Heart right ventricle (tissue), 16 donors: ENCODE measurements at regions of chr7 and their contacts with region 1.

Region 1: DNA sequence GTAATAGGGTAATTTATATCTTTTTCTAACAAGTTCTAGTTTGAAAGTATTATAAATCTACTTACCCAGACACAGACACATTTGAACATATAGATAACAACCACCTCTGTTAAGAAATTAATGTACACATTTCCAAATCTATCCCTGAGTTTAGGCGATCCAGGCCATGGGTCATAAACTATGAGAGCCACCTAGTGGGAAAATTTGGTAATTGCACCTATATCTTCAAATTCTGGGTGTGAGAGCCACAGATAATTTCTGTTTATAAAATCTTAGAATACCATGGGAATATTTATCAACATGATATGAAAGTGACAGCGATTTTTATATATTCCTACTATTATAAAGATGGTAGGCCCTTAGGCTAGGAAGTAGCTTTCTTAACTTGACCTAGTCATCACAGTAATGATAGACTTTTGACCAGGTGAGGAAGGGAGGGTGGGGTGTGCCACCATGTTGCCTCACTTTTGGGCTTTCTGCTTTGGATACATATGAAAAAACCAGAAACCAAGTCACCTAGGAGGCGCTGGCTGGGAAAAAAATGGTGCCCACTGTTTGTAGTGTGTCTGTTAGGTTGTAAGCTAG is 8.0 kb upstream of the EPHA1 start:
- DNase-seq: no peak
- ATAC-seq: peak in 2 of 8 donors; percentile 42 to 67
- H3K4me3 ChIP-seq: no peak overlapping the region
- H3K27ac ChIP-seq: no peak overlapping the region
- H3K4me1 ChIP-seq: peaks cover 0 to 29% (median 0%) of the 10 kb centered on the region in 9 donors
- H3K27me3 ChIP-seq: peaks cover 0 to 29% (median 10%) of the 10 kb centered on the region in 7 donors
- CTCF ChIP-seq: peak; percentile 74 to 88 (median 82)

Region 2: DNA sequence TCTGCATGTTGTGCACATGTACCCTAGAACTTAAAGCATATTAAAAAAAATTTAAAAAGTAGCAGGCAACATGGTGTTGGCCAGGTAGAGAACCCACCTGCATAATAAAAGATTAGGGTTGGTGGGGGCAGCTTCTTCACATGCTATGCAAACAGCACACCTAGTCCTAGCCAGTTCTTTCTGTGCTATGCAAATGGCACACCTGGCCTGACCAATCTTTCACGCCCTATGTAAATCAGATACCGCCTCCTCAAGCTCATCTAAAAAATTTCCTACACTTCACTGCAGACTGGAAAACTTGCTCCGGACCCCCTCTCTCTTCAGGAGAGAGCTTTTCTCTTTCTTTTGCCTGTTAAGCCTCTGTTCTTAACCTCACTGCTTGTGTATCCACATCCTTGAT is 299.3 kb before region 1 on chr7:
- intact Hi-C with region 1: no loop called
- DNase-seq: no peak
- ATAC-seq: no peak
- H3K4me3 ChIP-seq: no peak overlapping the region
- H3K27ac ChIP-seq: no peak overlapping the region
- H3K4me1 ChIP-seq: no peaks in the 10 kb centered on the region
- H3K27me3 ChIP-seq: no peaks in the 10 kb centered on the region
- CTCF ChIP-seq: no peak

Region 3: DNA sequence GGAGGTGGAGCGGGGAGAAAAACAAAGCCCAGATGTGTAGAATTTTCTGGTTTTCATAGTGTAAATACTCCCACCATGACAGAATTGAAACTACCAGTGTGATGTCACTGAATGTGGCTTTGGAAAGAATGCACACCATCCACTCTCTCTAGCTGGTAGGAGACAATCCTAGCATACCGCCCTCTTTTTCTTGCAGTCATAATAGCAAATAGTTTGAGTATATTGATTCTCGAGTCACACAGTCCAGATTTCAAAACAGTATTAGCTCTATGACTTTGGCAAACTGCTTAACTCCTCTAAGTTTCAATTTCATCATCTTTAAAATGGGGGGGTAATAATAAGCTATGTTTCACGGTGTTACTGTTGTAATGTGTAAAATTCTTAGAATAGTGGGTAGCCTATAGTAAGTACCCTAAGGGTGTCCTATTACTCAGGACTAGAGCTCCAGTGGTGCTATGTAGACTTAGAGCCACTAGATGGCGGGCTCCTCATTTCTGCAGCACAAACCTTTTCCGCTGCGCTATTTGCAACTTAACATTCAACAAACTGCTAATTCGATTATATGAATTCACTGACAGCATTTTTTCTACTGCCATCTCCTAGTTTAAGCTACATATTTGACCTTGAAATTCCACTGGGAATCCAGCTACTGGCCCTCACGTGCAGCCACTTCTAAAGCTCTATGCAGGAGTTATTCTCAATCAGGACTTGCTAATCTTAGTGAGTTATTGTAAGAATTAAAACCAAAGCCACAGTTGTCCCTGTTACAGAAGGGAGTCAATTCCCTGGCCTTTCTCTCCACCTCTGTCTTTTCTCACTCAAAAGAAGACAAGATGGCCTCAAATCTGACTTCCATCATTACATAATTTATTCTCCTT is 176.1 kb before region 1 on chr7:
- intact Hi-C with region 1: loop called in 9 of 10 experiments (anchors 1 to 5 kb)
- DNase-seq: peak; percentile 33 to 70
- ATAC-seq: peak; percentile 69 to 94 (median 88)
- H3K4me3 ChIP-seq: peak overlapping the region in 1 of 10 donors; percentile 13
- H3K27ac ChIP-seq: peak overlapping the region in 2 of 10 donors; percentile 5 to 82
- H3K4me1 ChIP-seq: peaks cover 0 to 41% (median 4%) of the 10 kb centered on the region in 9 donors
- H3K27me3 ChIP-seq: no peaks in the 10 kb centered on the region
- CTCF ChIP-seq: peak; percentile 84 to 98 (median 95)

Region 4: DNA sequence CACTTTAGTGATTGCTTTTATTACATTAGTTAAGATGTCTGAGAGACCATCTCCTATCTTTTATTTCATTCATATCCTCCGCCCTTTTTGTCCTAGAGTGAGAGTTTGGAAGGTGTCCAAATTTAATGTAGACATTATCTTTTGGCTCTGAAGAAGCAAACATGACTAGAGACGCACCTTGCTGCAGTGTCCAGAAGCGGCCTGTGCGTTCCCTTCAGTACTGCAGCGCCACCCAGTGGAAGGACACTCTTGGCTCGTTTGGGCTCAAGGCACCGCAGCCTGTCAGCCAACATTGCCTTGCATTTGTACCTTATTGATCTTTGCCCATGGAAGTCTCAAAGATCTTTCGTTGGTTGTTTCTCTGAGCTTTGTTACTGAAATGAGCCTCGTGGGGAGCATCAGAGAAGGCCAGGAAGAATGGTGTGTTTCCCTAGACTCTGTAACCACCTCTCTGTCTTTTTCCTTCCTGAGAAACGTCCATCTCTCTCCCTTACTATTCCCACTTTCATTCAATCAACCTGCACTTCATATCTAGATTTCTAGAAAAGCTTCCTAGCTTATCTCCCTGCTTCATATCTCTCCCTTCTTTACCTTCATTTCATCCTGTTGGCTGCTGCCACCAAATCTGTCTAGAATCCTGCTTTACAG is 111.1 kb before region 1 on chr7:
- intact Hi-C with region 1: loop called in 5 of 10 experiments (anchors 5 to 10 kb)
- DNase-seq: peak; percentile 74 to 75
- ATAC-seq: peak; percentile 62 to 93 (median 86)
- H3K4me3 ChIP-seq: no peak overlapping the region
- H3K27ac ChIP-seq: no peak overlapping the region
- H3K4me1 ChIP-seq: peaks cover 0 to 35% (median 3%) of the 10 kb centered on the region in 9 donors
- H3K27me3 ChIP-seq: no peaks in the 10 kb centered on the region
- CTCF ChIP-seq: peak; percentile 49 to 88 (median 80)

Region 5: DNA sequence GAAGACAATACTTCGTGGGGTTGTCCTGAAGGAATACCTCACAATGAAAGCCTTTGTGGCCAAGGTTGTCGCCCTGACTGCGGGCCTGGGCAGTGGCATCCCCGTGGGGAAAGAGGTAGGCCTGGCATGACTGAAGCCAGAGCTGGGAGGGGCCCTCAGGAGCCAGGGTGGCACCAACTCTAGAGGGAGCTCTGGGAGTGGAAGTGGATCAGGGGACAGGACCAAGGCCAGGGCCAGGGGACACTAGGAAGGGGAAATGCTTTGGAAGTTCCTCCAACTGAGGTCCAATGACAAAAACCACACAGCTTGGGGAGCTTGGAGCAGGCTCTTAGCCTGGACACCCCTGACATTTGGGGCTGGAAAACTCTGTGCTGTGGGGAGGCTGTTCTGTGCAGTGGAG is 94.9 kb before region 1 on chr7:
- intact Hi-C with region 1: loop called in 2 of 10 experiments (anchors 10 kb)
- DNase-seq: no peak
- ATAC-seq: peak in 1 of 8 donors; percentile 48
- H3K4me3 ChIP-seq: no peak overlapping the region
- H3K27ac ChIP-seq: peak overlapping the region in 1 of 10 donors; percentile 21
- H3K4me1 ChIP-seq: peaks cover 0 to 13% (median 6%) of the 10 kb centered on the region in 9 donors
- H3K27me3 ChIP-seq: no peaks in the 10 kb centered on the region
- CTCF ChIP-seq: peak in 3 of 9 donors; percentile 12 to 45 (median 17)

Region 6: GRCh38 chr7:143337216-143337615 is 79.4 kb before region 1 on chr7:
- intact Hi-C with region 1: no loop called
- DNase-seq: no peak
- ATAC-seq: no peak
- H3K4me3 ChIP-seq: no peak overlapping the region
- H3K27ac ChIP-seq: no peak overlapping the region
- H3K4me1 ChIP-seq: no peaks in the 10 kb centered on the region
- H3K27me3 ChIP-seq: peaks cover 0 to 29% (median 12%) of the 10 kb centered on the region in 7 donors
- CTCF ChIP-seq: no peak

Region 7: DNA sequence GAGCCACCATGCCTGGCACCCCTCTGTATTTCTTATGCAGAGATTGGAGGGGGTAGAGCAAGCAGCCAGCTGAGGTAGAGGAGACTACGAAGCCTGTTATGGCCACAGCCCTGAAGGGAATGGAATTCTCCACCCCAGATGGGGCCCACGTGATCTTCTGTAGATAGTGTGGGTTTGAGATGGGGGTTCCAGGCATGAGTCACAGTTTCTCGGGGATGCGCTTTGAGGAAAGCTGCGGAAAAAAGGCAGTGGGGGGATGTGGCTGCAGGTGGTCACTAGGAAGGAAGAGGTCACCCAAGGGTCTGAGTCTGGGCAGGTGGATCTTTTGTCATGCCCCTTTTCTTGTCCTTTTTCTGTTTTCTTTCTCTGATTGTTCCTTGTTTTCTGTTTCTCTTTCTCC is 65.6 kb before region 1 on chr7:
- intact Hi-C with region 1: no loop called
- DNase-seq: no peak
- ATAC-seq: no peak
- H3K4me3 ChIP-seq: no peak overlapping the region
- H3K27ac ChIP-seq: no peak overlapping the region
- H3K4me1 ChIP-seq: no peaks in the 10 kb centered on the region
- H3K27me3 ChIP-seq: peaks cover 0 to 35% (median 11%) of the 10 kb centered on the region in 7 donors
- CTCF ChIP-seq: no peak

Region 8: DNA sequence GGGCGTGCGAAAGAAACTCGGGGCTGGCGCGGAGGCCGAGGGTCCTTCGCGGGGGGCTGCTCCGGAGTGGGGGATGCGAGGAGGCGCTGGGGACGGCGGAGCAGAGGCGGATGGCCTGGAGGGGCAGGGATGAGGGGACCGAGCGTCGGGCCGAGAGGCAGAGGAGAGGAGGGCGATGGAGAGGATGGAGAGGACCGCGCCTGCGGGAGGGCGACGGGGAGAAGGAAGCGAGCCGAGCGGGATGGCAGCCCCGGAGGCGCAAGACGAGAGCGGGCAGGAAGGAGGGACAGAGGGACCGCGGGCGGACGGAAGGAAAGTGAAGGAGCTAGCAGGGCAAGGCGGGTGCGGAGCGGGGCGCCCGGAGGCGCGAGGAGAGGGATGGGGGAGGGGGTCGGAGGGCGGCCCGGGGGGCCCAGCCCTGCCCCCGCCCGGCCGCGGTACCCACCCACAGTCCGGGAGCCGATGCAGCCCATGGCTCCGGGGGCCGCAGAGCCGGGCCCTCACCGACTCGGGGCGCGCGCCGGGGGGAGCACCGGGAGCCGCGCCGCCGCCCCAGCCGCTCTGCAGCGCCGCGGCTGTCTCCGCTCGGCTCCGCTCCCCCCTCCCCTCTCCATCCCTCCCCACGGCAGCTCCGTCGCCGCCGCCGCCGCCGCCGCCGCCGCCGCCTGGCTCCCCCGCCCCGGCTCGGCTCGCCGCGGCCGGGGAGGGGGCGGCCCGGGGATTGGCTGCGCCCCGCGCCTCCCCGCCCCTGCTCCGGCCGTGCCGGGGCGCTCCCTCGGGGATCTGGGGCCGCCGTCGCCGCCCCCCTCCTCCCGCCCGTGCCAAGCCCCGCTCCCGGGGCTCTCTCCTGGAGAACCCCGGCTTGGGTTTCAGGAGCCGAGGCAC is 54.3 kb before region 1 on chr7 and contains the start of gene FAM131B:
- intact Hi-C with region 1: loop called in 3 of 10 experiments (anchors 10 kb)
- DNase-seq: no peak
- ATAC-seq: peak in 7 of 8 donors; percentile 20 to 57 (median 34)
- H3K4me3 ChIP-seq: peak within 1 kb of the TSS; percentile 47 to 68 (median 54)
- H3K27ac ChIP-seq: no peak within 1 kb of the TSS
- H3K4me1 ChIP-seq: peaks cover 0 to 14% (median 8%) of the 10 kb centered on the region in 9 donors
- H3K27me3 ChIP-seq: peaks cover 6 to 75% (median 54%) of the 10 kb centered on the region in 7 donors
- CTCF ChIP-seq: no peak
- total RNA-seq, gene FAM131B: 0.07 to 1.2 (median 0.39) TPM in 9 of 10 donors, not detected in the other

Region 9: GRCh38 chr7:143372070-143372469 is 44.6 kb before region 1 on chr7:
- intact Hi-C with region 1: loop called in 4 of 10 experiments (anchors 5 to 10 kb)
- DNase-seq: peak; percentile 57 to 60
- ATAC-seq: peak in 7 of 8 donors; percentile 52 to 75 (median 63)
- H3K4me3 ChIP-seq: no peak overlapping the region
- H3K27ac ChIP-seq: peak overlapping the region in 1 of 10 donors; percentile 58
- H3K4me1 ChIP-seq: peaks cover 0 to 47% (median 0%) of the 10 kb centered on the region in 9 donors
- H3K27me3 ChIP-seq: no peaks in the 10 kb centered on the region
- CTCF ChIP-seq: peak in 2 of 9 donors; percentile 9 to 27

Region 10: DNA sequence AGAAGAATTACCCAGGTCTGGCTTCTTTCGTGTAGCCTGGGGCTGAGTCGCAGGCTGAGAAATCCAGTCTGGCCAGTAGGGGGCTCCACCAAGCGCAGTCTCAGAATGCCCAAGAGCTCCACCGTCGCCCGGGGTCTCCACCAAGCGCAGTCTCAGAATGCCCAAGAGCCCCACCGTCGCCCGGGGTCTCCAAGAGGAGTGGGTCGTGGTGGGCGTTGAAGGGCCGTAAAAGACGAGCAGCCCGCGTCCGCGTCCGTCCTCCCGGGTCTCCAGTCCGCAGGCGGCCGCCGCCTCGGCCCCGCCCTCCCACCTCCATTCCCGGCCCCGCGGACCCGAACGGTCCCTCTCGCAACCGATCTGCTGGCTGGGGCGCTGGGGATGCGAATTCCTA is 36.4 kb before region 1 on chr7:
- intact Hi-C with region 1: loop called in 8 of 10 experiments (anchors 1 to 5 kb)
- DNase-seq: peak; percentile 89 to 91
- ATAC-seq: peak; percentile 60 to 88 (median 76)
- H3K4me3 ChIP-seq: peak overlapping the region; percentile 79 to 100 (median 96)
- H3K27ac ChIP-seq: peak overlapping the region; percentile 97 to 100 (median 100)
- H3K4me1 ChIP-seq: peaks cover 8 to 82% (median 45%) of the 10 kb centered on the region in 9 donors
- H3K27me3 ChIP-seq: no peaks in the 10 kb centered on the region
- CTCF ChIP-seq: peak; percentile 85 to 95 (median 92)